Activated naive CD4-positive, alpha-beta T cell treated with anti-CD3 and anti-CD28 coated beads for 36 hours (primary cell): ENCODE measurements at regions of chr4 and their contacts with region 1.

Region 1: GRCh38 chr4:112636688-112637551 is at the starts of genes LARP7 and ZGRF1:
- DNase-seq: peak; percentile 99
- H3K4me3 Mint-ChIP-seq: no peak within 1 kb of the TSS
- H3K27ac Mint-ChIP-seq: peak within 1 kb of the TSS; percentile 16
- H3K4me1 Mint-ChIP-seq: peaks cover 27% of the 10 kb centered on the region
- H3K27me3 Mint-ChIP-seq: no peaks in the 10 kb centered on the region
- total RNA-seq, gene LARP7: 41.5 to 41.9 TPM
- total RNA-seq, gene ZGRF1: 40.0 to 43.0 TPM

Region 2: GRCh38 chr4:112284662-112285411 is 352.1 kb before region 1 on chr4:
- CTCF ChIA-PET with region 1: no interaction called
- intact Hi-C with region 1: loop called (anchors 1 kb)
- DNase-seq: no peak
- H3K4me3 Mint-ChIP-seq: peak overlapping the region; percentile 97
- H3K27ac Mint-ChIP-seq: peak overlapping the region; percentile 97
- H3K4me1 Mint-ChIP-seq: peaks cover 72% of the 10 kb centered on the region
- H3K27me3 Mint-ChIP-seq: no peaks in the 10 kb centered on the region

Region 3: DNA sequence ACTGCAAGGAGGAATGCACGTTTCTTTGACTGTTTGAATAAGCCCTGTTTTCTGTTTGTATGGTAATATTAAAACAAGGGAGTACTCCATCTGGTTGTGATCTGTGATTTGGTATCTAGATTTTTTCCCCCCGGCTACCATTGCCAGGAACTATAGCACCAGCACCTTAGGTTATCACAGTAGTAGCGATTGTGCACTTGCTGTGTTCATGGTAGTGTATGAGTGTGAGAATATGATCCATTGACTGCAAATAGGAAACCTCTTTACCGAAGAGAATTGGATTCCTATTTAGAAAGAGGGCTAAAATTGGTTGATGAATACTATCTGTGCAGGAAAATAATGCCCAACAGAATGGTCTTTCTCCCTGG is 69.9 kb after region 1 on chr4:
- CTCF ChIA-PET with region 1: no interaction called
- intact Hi-C with region 1: loop called (anchors 2 kb)
- DNase-seq: no peak
- H3K4me3 Mint-ChIP-seq: peak overlapping the region; percentile 88
- H3K27ac Mint-ChIP-seq: no peak overlapping the region
- H3K4me1 Mint-ChIP-seq: peaks cover 15% of the 10 kb centered on the region
- H3K27me3 Mint-ChIP-seq: peaks cover 42% of the 10 kb centered on the region

Region 4: GRCh38 chr4:112817933-112818593 is 181.1 kb after region 1 on chr4:
- CTCF ChIA-PET with region 1: interaction called, 6 read pairs
- intact Hi-C with region 1: loop called (anchors 1 kb)
- DNase-seq: peak; percentile 88
- H3K4me3 Mint-ChIP-seq: peak overlapping the region; percentile 79
- H3K27ac Mint-ChIP-seq: peak overlapping the region; percentile 62
- H3K4me1 Mint-ChIP-seq: peaks cover 15% of the 10 kb centered on the region
- H3K27me3 Mint-ChIP-seq: peaks cover 36% of the 10 kb centered on the region

Region 5: GRCh38 chr4:112951362-112952312 is 314.7 kb after region 1 on chr4:
- CTCF ChIA-PET with region 1: interaction called, 3 read pairs
- intact Hi-C with region 1: loop called (anchors 5 kb)
- DNase-seq: no peak
- H3K4me3 Mint-ChIP-seq: no peak overlapping the region
- H3K27ac Mint-ChIP-seq: no peak overlapping the region
- H3K4me1 Mint-ChIP-seq: no peaks in the 10 kb centered on the region
- H3K27me3 Mint-ChIP-seq: peaks cover 15% of the 10 kb centered on the region